MCF 10A (cell line): ENCODE measurements at regions of chr18 and their contacts with region 1.

Region 1: GRCh38 chr18:74171910-74172606 is 23.7 kb downstream of the TIMM21 start:
- DNase-seq: no peak
- H3K4me3 Mint-ChIP-seq: no peak overlapping the region
- H3K27ac Mint-ChIP-seq: no peak overlapping the region
- H3K4me1 Mint-ChIP-seq: peaks cover 7% of the 10 kb centered on the region
- H3K27me3 Mint-ChIP-seq: peaks cover 77% of the 10 kb centered on the region
- CTCF ChIP-seq: no peak

Region 2: DNA sequence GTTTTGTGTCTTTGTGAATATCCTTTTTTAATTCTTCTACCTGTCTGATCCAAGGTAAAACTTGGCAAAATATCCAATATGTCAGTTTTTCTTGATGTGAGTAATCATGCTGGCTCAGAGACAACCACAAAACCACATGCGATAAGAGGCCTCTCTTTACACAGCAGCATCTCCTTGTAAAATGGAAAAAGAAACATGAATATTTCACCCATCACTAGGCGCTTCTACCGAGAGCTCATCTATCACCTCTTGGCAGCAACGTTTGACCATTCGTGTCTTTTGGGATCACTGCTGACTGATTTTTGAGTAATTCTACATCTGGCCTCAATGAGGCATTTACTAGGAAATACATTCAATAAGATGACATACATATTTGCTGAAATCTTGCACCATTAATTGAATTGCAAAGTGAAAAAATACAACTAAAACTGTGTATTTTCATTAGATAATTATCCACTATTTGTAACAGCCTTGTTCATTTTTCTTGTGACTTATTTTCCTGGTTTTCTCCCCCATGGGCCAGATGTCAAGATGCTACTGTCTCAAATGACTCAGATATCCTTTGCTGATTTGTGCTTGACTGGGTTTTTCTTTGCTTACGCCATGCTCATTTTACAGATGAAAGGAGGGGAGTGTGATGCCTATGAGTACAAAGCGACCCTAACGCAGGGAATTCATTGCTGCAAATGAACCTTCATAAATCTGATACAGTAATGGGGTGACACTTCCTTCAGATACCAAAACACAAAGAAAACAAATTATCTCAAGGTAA is 491.9 kb before region 1 on chr18:
- CTCF ChIA-PET with region 1: no interaction called
- POLR2A ChIA-PET with region 1: no interaction called
- intact Hi-C with region 1: no loop called
- DNase-seq: peak; percentile 60
- H3K4me3 Mint-ChIP-seq: no peak overlapping the region
- H3K27ac Mint-ChIP-seq: peak overlapping the region; percentile 81
- H3K4me1 Mint-ChIP-seq: peaks cover 35% of the 10 kb centered on the region
- H3K27me3 Mint-ChIP-seq: no peaks in the 10 kb centered on the region
- CTCF ChIP-seq: no peak

Region 3: GRCh38 chr18:74152857-74153256 is 19.2 kb before region 1 on chr18:
- CTCF ChIA-PET with region 1: interaction called, 4 read pairs
- POLR2A ChIA-PET with region 1: no interaction called
- intact Hi-C with region 1: loop called (anchors 1 kb)
- DNase-seq: no peak
- H3K4me3 Mint-ChIP-seq: no peak overlapping the region
- H3K27ac Mint-ChIP-seq: no peak overlapping the region
- H3K4me1 Mint-ChIP-seq: peaks cover 17% of the 10 kb centered on the region
- H3K27me3 Mint-ChIP-seq: no peaks in the 10 kb centered on the region
- CTCF ChIP-seq: peak; percentile 30